Esophagus muscularis mucosa (tissue), 4 donors: ENCODE measurements at regions of chr5 and their contacts with region 1.

Region 1: GRCh38 chr5:34656001-34656699 is at the start of gene RAI14:
- DNase-seq: no peak
- H3K4me3 ChIP-seq: peak within 1 kb of the TSS; percentile 65 to 98 (median 86)
- H3K27ac ChIP-seq: peak within 1 kb of the TSS; percentile 90 to 98 (median 94)
- H3K4me1 ChIP-seq: peaks cover 16 to 37% (median 31%) of the 10 kb centered on the region in 4 donors
- H3K27me3 ChIP-seq: no peaks in the 10 kb centered on the region
- CTCF ChIP-seq: peak; percentile 16 to 24 (median 20)
- EP300 ChIP-seq: no peak
- POLR2A ChIP-seq: peak; percentile 64
- total RNA-seq, gene RAI14: 57.3 to 76.4 (median 68.1) TPM

Region 2: DNA sequence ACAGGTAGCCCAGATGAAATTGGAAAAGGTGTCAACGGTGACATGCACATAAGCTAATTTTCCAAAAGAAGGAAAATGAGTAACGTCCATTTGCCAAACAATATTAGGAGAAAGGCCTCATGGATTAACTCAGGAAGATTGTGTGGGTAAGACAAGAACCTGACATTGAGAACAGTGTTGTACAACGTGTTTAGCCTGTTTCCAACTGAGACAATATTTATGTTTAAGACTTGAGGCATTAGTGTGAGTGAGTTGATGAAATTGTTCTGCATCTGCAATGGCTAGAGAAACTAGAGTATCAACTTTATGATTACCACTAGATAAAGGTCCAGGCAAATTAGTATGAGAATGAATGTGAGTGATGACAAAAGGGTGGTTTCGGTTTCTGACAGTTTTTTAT is 191.3 kb before region 1 on chr5:
- intact Hi-C with region 1: no loop called
- DNase-seq: no peak
- H3K4me3 ChIP-seq: no peak overlapping the region
- H3K27ac ChIP-seq: no peak overlapping the region
- H3K4me1 ChIP-seq: no peaks in the 10 kb centered on the region
- H3K27me3 ChIP-seq: peaks cover 0 to 3% (median 0%) of the 10 kb centered on the region in 4 donors
- CTCF ChIP-seq: no peak
- EP300 ChIP-seq: no peak
- POLR2A ChIP-seq: no peak

Region 3: DNA sequence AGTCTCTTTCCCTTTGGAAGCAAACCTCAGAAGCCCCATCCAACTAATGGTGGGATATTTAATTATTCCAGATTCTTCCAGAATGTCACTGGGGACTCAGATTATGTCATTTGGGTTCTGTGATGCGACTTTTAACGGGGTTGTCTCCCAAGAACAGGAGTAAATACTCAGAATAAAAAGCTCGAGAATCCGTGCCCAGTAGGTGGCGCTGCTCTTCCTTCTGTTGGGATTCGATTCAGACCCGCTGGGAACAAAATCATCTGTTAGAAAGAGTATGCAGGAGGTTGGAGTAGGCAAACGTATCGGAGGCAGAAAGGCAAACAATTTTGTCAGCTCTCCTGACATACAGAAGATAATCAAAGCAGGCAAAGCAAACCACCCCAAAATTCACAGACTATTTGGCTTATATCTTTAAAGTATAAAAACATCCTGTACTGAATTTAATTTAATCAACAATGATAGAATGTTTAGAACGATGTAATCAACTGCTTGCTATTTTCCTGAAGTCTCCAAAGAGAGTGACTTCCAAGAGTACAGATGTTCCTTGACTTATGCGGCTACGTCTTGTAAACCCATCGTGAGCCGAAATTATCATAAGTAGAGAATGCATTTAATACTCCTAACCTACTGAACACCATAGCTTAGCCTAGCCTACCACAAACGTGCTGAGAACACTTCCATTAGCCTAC is 169.8 kb before region 1 on chr5:
- intact Hi-C with region 1: loop called (anchors 5 kb)
- DNase-seq: peak; percentile 95
- H3K4me3 ChIP-seq: no peak overlapping the region
- H3K27ac ChIP-seq: peak overlapping the region; percentile 79 to 82 (median 80)
- H3K4me1 ChIP-seq: peaks cover 12 to 27% (median 25%) of the 10 kb centered on the region in 4 donors
- H3K27me3 ChIP-seq: no peaks in the 10 kb centered on the region
- CTCF ChIP-seq: peak; percentile 82 to 87 (median 86)
- EP300 ChIP-seq: no peak
- POLR2A ChIP-seq: no peak

Region 4: GRCh38 chr5:34522599-34523386 is 133.4 kb before region 1 on chr5:
- intact Hi-C with region 1: loop called (anchors 5 kb)
- DNase-seq: no peak
- H3K4me3 ChIP-seq: no peak overlapping the region
- H3K27ac ChIP-seq: peak overlapping the region; percentile 70 to 80 (median 75)
- H3K4me1 ChIP-seq: peaks cover 5 to 34% (median 15%) of the 10 kb centered on the region in 4 donors
- H3K27me3 ChIP-seq: no peaks in the 10 kb centered on the region
- CTCF ChIP-seq: peak; percentile 73 to 74 (median 74)
- EP300 ChIP-seq: no peak
- POLR2A ChIP-seq: no peak

Region 5: DNA sequence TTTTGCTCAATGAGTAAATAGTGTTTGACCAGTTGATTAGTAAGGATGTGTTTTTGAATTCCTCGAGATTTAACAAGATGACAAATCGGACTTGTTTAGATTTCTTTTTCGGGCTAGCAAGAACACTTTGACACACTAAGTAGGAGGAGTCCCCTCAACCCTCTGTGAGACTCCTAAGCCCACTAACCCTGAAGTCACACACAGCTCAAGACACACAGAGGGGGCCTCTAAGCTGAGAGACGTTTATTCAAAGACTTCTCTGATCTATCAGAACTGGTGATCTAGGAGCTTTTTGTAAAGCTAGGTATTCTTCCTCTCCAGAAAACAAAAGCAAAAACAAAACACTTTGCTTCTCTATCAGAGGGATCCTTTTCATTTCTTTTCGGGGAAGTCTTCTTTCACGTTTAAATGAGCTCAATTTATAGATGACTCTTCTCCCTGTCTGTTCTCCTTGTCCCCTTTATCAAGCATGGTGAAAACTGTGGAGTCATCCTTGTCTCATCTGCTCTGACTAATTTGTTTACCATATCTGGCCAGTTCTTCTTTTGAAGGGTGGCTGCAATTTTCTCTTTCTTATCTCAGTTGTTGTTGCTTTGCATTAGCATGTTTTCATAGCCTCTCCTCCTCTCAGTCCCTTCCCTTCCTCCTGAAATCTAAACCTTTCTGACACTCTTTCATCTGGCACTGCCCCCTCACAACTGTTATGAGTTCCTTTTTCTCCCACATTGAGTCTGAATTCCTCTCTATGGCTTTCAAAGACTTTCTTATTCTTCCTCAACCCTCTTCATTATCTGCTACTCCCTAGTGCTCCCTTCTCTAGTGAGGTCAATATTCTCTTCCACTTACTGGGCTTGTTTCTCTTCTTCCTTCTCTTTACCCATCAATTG is 68.6 kb before region 1 on chr5:
- intact Hi-C with region 1: no loop called
- DNase-seq: no peak
- H3K4me3 ChIP-seq: no peak overlapping the region
- H3K27ac ChIP-seq: no peak overlapping the region
- H3K4me1 ChIP-seq: no peaks in the 10 kb centered on the region
- H3K27me3 ChIP-seq: no peaks in the 10 kb centered on the region
- CTCF ChIP-seq: no peak
- EP300 ChIP-seq: no peak
- POLR2A ChIP-seq: no peak

Region 6: GRCh38 chr5:34598177-34598794 is 57.9 kb before region 1 on chr5:
- intact Hi-C with region 1: loop called (anchors 5 kb)
- DNase-seq: no peak
- H3K4me3 ChIP-seq: no peak overlapping the region
- H3K27ac ChIP-seq: peak overlapping the region; percentile 21 to 50 (median 32)
- H3K4me1 ChIP-seq: peaks cover 0 to 28% (median 23%) of the 10 kb centered on the region in 4 donors
- H3K27me3 ChIP-seq: no peaks in the 10 kb centered on the region
- CTCF ChIP-seq: no peak
- EP300 ChIP-seq: no peak
- POLR2A ChIP-seq: no peak

Region 7: GRCh38 chr5:34838785-34839714 is 182.9 kb after region 1 on chr5 and contains the start of gene TTC23L:
- intact Hi-C with region 1: loop called (anchors 5 kb)
- DNase-seq: peak; percentile 95
- H3K4me3 ChIP-seq: peak within 1 kb of the TSS; percentile 62 to 87 (median 76)
- H3K27ac ChIP-seq: peak within 1 kb of the TSS; percentile 66 to 78 (median 76)
- H3K4me1 ChIP-seq: peaks cover 3 to 14% (median 12%) of the 10 kb centered on the region in 4 donors
- H3K27me3 ChIP-seq: no peaks in the 10 kb centered on the region
- CTCF ChIP-seq: no peak
- EP300 ChIP-seq: no peak
- POLR2A ChIP-seq: no peak
- total RNA-seq, gene TTC23L: not detected

Region 8: GRCh38 chr5:34876275-34876674 is 220.1 kb after region 1 on chr5:
- intact Hi-C with region 1: no loop called
- DNase-seq: no peak
- H3K4me3 ChIP-seq: no peak overlapping the region
- H3K27ac ChIP-seq: no peak overlapping the region
- H3K4me1 ChIP-seq: no peaks in the 10 kb centered on the region
- H3K27me3 ChIP-seq: no peaks in the 10 kb centered on the region
- CTCF ChIP-seq: no peak
- EP300 ChIP-seq: no peak
- POLR2A ChIP-seq: no peak

Region 9: DNA sequence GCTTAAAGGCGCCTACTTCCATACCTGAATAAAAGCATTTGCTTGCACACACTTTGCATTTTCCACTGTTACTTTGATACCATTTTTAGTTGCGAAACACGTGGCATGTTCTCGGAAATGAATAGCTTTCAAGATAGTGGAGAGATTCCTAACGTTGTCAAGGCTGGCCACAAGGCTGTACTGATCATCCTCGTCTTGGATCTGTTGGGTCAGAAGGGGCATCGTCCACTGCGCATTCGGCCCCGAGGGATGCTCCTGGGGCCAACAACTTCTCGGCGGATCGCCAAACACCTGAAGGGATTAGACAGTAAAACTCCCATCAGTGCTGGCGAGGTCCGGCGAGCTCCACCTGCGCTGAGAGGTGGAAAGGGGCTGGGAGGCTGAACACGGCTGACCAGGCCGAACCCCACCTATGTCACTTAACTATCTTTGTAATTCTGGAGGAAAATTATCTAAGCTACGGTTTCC is 258.6 kb after region 1 on chr5:
- intact Hi-C with region 1: loop called (anchors 5 kb)
- DNase-seq: no peak
- H3K4me3 ChIP-seq: peak overlapping the region; percentile 72 to 98 (median 95)
- H3K27ac ChIP-seq: peak overlapping the region; percentile 85 to 89 (median 88)
- H3K4me1 ChIP-seq: peaks cover 25 to 51% (median 48%) of the 10 kb centered on the region in 4 donors
- H3K27me3 ChIP-seq: no peaks in the 10 kb centered on the region
- CTCF ChIP-seq: no peak
- EP300 ChIP-seq: no peak
- POLR2A ChIP-seq: no peak